ENCODE measurements at regions of chr4 and their contacts with region 1.

Region 1: GRCh38 chr4:139416073-139416673 is 37.7 kb upstream of the RAB33B start:
- DNase-seq: peak; percentile 24
- H3K4me3 Mint-ChIP-seq: no peak overlapping the region
- H3K27ac Mint-ChIP-seq: no peak overlapping the region
- H3K4me1 Mint-ChIP-seq: peaks cover 11% of the 10 kb centered on the region
- H3K27me3 Mint-ChIP-seq: no peaks in the 10 kb centered on the region
- CTCF ChIP-seq: peak; percentile 16

Region 2: GRCh38 chr4:139266583-139267257 is 149.5 kb before region 1 on chr4:
- CTCF ChIA-PET with region 1: no interaction called
- intact Hi-C with region 1: no loop called
- DNase-seq: peak; percentile 31
- H3K4me3 Mint-ChIP-seq: peak overlapping the region; percentile 67
- H3K27ac Mint-ChIP-seq: no peak overlapping the region
- H3K4me1 Mint-ChIP-seq: peaks cover 9% of the 10 kb centered on the region
- H3K27me3 Mint-ChIP-seq: no peaks in the 10 kb centered on the region
- CTCF ChIP-seq: no peak

Region 3: DNA sequence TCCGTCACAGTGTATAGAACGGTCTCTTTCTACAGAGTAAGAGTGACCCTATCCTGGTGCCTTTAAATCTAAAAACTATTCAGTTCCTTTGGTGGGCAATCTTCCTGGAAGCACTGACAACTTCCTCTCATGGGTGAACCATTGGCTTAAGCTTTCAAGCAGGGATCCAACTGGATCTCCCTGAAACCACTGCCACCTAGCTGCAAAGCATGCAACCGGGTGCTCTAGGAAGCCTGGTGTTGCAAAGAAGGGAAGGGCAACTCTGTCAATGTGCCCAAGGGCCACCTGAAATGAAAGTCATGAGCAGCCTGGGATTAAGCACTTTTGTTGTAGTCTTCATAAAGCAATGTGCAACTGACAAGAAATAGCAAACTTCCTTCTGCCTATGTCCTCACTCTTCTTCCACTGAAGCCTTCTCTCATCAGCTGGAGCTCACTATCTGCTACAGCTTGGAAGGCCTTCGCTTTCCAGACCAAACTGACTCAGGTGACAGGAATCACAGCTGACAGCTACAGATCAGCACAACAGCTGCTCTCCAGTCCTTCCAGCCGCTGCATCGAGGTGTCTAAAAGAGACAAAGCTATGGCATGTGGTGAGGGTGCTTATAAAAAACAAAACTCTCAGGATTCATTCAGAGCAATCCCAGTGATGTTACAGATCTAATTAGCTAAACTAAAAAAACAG is 93.7 kb after region 1 on chr4:
- CTCF ChIA-PET with region 1: no interaction called
- intact Hi-C with region 1: loop called (anchors 10 kb)
- DNase-seq: peak; percentile 3
- H3K4me3 Mint-ChIP-seq: no peak overlapping the region
- H3K27ac Mint-ChIP-seq: no peak overlapping the region
- H3K4me1 Mint-ChIP-seq: no peaks in the 10 kb centered on the region
- H3K27me3 Mint-ChIP-seq: no peaks in the 10 kb centered on the region
- CTCF ChIP-seq: no peak

Measured in Calu3 (cell line).